ENCODE measurements at regions of chr11 and their contacts with region 1.

Region 1: DNA sequence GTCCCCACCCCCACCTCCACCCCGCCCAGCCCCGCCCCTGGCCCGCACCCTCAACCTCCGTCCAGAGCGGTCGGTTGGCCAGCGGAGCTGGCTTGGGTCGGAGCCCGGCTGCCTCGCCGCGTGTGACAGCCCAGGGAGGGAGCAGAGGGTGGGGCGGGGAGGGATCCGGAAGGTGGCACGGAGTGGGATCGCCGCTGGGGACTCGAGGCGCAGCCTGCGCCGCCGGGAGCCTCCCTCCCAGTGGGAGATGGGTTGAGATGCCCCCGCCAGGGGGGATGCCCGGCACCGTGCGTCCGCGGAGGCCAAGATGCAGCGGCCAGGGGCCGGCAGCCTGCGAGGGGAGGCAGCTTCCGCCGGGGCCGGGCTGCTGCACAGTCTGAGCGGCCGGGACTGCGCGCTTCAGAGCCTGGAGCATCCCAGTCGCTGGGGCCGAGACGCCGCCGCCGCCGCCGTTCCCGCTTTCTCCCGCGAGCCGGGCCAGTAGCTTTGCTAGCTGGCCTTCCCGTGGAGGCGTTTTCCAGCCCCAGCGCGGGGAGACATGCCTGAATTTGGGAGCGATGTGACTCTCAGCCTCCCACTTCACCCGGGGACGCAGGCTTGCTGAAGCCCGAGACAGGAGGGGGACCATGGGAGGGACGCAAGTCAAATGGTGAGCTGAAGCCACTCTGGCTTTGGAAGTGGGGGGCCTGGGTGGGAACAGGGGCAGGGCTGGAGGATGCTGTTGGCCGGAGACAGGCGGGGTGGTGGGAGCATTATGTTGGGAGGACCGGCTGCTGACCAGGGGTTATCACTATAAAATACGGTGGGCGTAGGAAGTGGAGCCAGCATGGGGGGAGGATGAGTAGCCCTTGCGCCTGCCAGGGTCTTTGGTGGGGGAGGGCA is 40.2 kb downstream of the DIXDC1 start:
- DNase-seq: peak; percentile 89

Region 2: GRCh38 chr11:111937844-111938243 is 39.5 kb before region 1 on chr11:
- intact Hi-C with region 1: loop called (anchors 1 kb)
- DNase-seq: no peak

Measured in cardiac septum (tissue), 1 donor.